ENCODE measurements at regions of chr14 and their contacts with region 1.

Region 1: GRCh38 chr14:32593290-32593942 is 264.3 kb downstream of the AKAP6 start:
- DNase-seq: no peak
- ATAC-seq: peak; percentile 68 to 84 (median 82)
- H3K4me3 ChIP-seq: no peak overlapping the region
- H3K27ac ChIP-seq: peak overlapping the region; percentile 7
- H3K4me1 ChIP-seq: peaks cover 75% of the 10 kb centered on the region
- H3K27me3 ChIP-seq: no peaks in the 10 kb centered on the region
- CTCF ChIP-seq: no peak

Region 2: DNA sequence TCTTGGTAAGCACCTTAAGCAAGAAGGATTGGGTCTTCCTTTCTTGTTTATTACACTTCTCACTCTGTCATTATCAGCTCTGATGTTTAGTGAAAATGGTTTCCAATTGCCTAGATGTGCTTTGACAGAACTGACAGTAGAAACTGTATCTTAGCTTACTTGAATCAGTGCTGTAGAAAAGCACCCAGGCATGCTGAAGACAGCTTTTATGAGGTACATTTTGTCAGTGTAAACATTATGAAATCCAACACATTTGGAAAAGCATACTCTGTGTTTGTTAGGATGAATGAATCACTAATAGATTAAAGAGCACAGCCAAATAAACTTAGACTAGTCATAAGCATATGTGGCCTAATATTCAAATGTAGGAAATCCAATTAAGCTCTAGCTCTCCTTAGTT is 55.0 kb after region 1 on chr14:
- intact Hi-C with region 1: loop called in 1 of 2 experiments (anchors 10 kb)
- DNase-seq: no peak
- ATAC-seq: peak; percentile 26 to 86 (median 68)
- H3K4me3 ChIP-seq: no peak overlapping the region
- H3K27ac ChIP-seq: no peak overlapping the region
- H3K4me1 ChIP-seq: peaks cover 6% of the 10 kb centered on the region
- H3K27me3 ChIP-seq: no peaks in the 10 kb centered on the region
- CTCF ChIP-seq: no peak

Region 3: DNA sequence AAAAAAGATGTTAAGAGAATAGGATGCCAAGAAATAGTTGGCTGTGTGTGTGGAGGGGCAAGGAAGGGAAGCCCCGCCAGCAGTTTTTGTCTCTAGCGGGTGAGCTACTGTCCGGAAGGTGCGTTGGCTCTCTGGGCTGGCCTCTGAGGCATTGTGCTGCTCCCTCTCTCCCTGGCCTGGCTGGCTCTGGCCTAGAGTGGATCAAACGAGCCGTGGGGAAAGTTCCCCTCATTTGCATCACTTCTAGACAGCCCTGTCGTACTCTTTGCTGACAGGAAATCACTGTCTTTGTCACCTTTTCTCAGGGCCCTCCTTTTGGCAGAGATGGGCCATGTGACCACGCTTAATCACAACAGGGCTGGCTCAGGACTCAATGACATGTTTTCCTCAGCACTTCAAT is 109.1 kb after region 1 on chr14:
- intact Hi-C with region 1: loop called in 1 of 2 experiments (anchors 10 kb)
- DNase-seq: peak; percentile 27 to 49
- ATAC-seq: peak; percentile 65 to 85 (median 76)
- H3K4me3 ChIP-seq: no peak overlapping the region
- H3K27ac ChIP-seq: peak overlapping the region; percentile 48
- H3K4me1 ChIP-seq: peaks cover 34% of the 10 kb centered on the region
- H3K27me3 ChIP-seq: no peaks in the 10 kb centered on the region
- CTCF ChIP-seq: no peak

Region 4: DNA sequence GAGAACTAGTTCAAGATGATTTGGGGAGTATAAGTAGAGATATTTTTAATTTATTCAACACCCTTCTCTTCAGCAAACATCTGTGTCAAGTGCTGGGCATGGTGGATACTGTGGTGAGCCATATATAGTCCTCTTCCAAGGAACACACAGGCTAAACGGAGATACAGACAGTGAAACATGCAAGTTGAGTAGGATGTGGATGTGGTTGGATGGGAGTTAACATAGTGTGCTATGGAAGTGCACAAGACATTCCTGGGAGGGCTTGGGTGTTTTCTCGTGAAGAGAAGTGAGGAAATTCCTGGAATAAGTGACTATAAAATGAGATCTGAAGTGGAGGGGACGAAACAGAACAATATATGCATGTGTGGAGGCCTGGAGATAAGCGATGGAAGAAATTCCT is 164.2 kb after region 1 on chr14:
- intact Hi-C with region 1: no loop called
- DNase-seq: no peak
- ATAC-seq: no peak
- H3K4me3 ChIP-seq: no peak overlapping the region
- H3K27ac ChIP-seq: no peak overlapping the region
- H3K4me1 ChIP-seq: no peaks in the 10 kb centered on the region
- H3K27me3 ChIP-seq: no peaks in the 10 kb centered on the region
- CTCF ChIP-seq: no peak